GM13977 (cell line): ENCODE measurements at regions of chr1 and their contacts with region 1.

Region 1: DNA sequence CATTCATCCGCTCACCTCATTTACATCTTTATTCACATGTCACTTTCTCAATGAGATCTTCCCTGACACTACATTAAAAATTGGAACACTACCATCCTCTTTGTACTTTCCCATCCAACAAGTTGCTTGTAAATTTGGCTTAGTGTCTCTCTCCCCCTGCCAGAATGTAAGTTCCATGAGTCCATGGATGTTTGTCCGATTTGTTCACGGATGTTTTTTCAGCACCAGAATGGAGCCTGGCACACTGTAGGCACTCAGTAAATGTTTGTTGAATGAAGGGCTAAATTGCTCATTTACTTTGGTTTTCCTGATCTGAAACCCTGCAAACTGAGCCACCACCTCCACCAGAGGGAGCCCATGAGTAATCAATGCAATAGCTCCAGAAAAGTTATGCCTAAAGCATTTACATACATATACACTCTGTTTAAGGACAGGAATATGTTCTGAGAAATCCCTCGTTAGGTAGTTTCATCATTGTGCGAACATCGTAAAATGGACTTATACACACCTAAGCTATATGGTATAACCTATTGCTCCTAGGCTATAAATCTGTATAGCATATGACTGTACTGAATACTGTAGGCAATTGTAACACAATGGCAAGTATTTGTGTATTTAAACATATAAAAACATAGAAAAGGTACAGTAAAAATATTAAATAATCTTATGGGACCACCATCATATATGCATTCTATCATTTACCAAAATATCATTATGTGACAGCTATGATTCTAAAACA is 2.8 kb upstream of the EYA3 start:
- DNase-seq: peak; percentile 63
- CTCF ChIP-seq: peak; percentile 82

Region 2: GRCh38 chr1:28199328-28200233 is 108.4 kb after region 1 on chr1:
- in situ Hi-C with region 1: loop called (anchors 5 kb)
- DNase-seq: peak; percentile 87
- CTCF ChIP-seq: no peak